Activated CD4-positive, alpha-beta memory T cell treated with anti-CD3 and anti-CD28 coated beads for 36 hours (primary cell): ENCODE measurements at regions of chr3 and their contacts with region 1.

Region 1: DNA sequence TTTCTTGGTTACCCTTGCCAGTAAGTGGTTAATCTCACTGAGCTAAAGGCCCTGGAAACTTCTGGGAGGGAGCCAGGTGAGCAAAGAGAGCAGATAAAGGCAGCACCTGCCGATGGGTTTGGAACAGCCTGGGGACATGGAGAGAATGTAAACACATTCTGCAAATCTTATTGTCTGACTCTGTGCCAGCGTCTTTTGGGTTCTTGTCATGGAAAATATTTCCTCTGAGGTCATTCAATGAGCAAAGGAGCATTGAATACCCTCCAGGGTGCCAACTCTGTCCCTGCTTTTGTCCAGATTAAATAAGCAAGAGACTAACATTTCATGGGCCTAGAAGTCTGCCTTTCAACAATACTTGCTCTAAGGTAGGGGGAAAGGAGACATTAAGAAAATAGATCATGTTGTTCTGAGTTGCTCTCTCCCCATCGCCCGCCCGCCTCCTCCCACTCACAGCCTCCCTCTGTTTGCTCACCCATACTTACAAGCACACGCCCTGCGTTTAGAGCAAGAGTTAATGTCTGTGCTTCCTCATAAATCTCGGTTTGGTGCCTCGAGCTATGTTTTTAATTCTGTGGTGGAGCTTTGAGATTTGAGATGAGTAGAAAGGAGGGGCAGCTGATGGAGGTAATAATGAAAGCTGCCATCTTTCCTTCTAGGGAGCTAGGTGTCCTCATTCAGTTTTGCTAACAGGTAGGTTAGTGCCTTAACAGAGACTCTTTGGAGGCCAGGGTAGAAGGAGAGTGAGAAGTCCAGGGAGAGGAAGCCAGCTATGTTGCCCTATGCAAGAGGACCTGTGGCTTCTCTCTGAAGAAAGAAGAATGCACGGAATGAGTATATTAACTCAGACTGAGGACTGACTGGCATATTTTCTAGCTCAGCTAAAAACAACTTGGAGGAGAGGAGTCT is 132.9 kb downstream of the TPRG1 start:
- DNase-seq: peak; percentile 46
- H3K4me3 Mint-ChIP-seq: no peak overlapping the region
- H3K27ac Mint-ChIP-seq: peak overlapping the region; percentile 89
- H3K4me1 Mint-ChIP-seq: peaks cover 49% of the 10 kb centered on the region
- H3K27me3 Mint-ChIP-seq: no peaks in the 10 kb centered on the region

Region 2: GRCh38 chr3:189172668-189173419 is 131.9 kb before region 1 on chr3:
- CTCF ChIA-PET with region 1: no interaction called
- POLR2A ChIA-PET with region 1: no interaction called
- intact Hi-C with region 1: no loop called
- DNase-seq: no peak
- H3K4me3 Mint-ChIP-seq: no peak overlapping the region
- H3K27ac Mint-ChIP-seq: no peak overlapping the region
- H3K4me1 Mint-ChIP-seq: peaks cover 4% of the 10 kb centered on the region
- H3K27me3 Mint-ChIP-seq: peaks cover 1% of the 10 kb centered on the region

Region 3: DNA sequence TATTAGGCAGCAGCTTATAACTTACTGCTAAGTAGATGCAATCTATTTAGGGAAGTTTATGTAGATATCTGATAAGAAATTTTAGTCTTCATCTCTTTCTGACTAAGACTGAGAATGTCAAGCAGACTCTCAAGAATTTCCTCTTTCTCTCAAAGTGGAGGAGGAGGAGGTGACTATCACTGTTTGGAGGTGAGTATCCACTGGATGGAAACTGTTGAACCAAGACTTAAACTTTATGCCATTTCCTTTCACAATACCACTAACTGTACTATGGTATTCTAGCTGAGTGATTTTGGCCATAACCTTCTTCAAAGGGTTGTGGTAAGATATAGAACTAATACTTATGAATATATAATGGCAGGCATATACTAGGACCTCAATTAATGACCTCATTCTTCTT is 68.3 kb before region 1 on chr3:
- CTCF ChIA-PET with region 1: no interaction called
- POLR2A ChIA-PET with region 1: no interaction called
- intact Hi-C with region 1: no loop called
- DNase-seq: no peak
- H3K4me3 Mint-ChIP-seq: no peak overlapping the region
- H3K27ac Mint-ChIP-seq: no peak overlapping the region
- H3K4me1 Mint-ChIP-seq: peaks cover 4% of the 10 kb centered on the region
- H3K27me3 Mint-ChIP-seq: peaks cover 2% of the 10 kb centered on the region

Region 4: DNA sequence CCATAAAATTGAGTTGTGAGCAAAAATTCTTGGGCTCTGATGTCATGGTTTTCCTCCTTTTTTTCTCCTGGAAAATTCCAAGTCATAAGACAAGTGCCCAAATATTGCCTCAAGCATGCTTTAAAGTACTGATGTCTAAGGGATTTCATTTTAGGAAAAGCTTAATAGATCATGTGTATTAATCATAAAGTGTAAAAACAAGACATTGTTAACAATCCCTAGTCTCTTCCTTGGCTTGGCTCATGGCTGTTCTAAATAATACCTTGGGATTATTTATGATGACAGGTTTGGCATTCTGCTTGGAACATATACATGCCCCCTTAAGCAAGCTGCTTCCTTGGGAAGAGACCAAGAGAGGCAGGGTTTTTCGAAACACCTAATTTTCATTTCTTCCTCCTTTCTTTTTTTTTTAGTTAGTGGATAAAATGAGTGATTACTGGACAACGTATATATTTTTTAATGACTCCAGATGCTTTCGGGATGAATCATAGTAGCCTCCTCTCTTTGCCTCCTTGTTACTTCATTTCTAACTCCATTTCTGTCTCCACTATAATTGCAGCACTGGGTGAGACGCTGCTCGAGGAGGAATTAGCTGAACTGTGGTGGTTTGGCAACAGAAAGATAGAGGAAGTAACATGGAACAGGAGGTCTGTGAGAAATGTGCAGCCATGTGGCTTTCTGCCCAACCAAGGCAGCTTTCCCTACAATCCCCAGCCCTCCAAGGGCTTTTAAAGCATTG is 28.0 kb before region 1 on chr3:
- CTCF ChIA-PET with region 1: interaction called, 7 read pairs
- POLR2A ChIA-PET with region 1: interaction called, 3 read pairs
- intact Hi-C with region 1: loop called (anchors 1 kb)
- DNase-seq: no peak
- H3K4me3 Mint-ChIP-seq: no peak overlapping the region
- H3K27ac Mint-ChIP-seq: peak overlapping the region; percentile 5
- H3K4me1 Mint-ChIP-seq: peaks cover 30% of the 10 kb centered on the region
- H3K27me3 Mint-ChIP-seq: no peaks in the 10 kb centered on the region

Region 5: DNA sequence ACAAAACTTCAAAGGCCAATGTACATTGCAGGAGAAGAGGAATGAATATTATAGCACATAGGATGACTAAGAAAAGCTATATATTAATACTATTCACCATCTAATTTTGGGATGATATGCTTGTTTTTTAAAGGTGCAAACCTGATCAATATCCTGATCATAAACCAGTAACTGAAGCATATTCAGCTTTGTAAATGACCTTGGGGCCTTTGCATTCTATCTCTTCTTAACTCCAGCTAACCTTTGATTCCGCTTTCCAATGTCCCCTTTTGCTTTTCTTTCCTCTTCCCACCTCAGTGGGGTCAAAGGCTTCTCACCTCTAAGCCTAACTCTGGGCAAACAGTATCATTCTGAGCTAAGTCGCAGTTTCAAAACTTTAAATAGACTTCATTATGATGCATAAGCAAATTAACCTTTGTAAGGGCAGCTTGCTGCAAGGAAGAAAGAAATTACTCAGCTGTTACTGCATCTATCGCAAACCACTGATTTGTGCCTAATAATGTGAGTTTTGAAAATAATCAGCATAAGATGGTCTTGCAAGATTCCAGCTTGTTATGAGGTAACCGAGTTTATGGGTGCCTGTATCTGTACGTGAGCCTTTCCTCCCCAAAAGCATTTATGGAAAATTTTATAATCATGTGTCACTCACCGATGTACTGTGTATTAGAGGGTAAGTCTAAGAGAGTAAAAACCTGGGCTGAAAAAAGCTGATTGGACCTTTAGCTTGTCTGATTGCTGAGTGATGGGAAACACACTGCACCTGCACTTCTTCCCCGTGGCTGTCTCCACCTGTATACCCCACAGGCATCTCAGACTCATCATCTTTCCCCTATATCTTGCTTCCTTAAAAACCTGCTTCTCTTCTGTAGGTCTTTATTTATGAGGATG is 16.1 kb before region 1 on chr3:
- CTCF ChIA-PET with region 1: interaction called, 3 read pairs
- POLR2A ChIA-PET with region 1: interaction called, 17 read pairs
- intact Hi-C with region 1: loop called (anchors 1 kb)
- DNase-seq: no peak
- H3K4me3 Mint-ChIP-seq: no peak overlapping the region
- H3K27ac Mint-ChIP-seq: peak overlapping the region; percentile 33
- H3K4me1 Mint-ChIP-seq: peaks cover 33% of the 10 kb centered on the region
- H3K27me3 Mint-ChIP-seq: no peaks in the 10 kb centered on the region

Region 6: GRCh38 chr3:189334064-189334920 is 29.6 kb after region 1 on chr3:
- CTCF ChIA-PET with region 1: interaction called, 4 read pairs
- POLR2A ChIA-PET with region 1: interaction called, 13 read pairs
- intact Hi-C with region 1: loop called (anchors 1 kb)
- DNase-seq: no peak
- H3K4me3 Mint-ChIP-seq: no peak overlapping the region
- H3K27ac Mint-ChIP-seq: no peak overlapping the region
- H3K4me1 Mint-ChIP-seq: peaks cover 40% of the 10 kb centered on the region
- H3K27me3 Mint-ChIP-seq: no peaks in the 10 kb centered on the region

Region 7: DNA sequence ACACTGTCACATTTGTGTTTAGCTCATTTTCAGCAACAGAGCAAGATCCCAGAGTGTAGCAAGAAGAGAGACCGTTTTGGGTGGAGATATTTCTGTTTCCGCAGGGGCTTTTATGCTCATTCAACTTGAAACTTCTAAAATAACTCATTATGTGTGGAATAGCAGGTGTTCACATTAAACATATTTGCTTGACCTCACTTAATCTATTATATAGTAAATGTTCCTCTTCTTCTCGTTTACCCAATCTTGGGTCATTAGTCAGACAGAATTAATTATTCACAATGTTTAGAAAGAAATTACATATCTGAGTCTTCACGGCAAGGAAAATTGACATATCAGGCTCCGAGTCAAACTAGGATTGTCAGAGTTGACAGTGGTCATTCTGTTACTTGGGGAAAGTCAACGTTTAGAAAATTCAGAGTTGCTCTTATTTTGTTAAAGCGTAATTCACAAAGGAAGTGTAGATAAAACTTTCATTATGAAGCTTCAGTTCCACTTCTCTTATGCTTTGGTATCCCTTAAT is 90.0 kb after region 1 on chr3:
- CTCF ChIA-PET with region 1: no interaction called
- POLR2A ChIA-PET with region 1: no interaction called
- intact Hi-C with region 1: loop called (anchors 2 kb)
- DNase-seq: no peak
- H3K4me3 Mint-ChIP-seq: no peak overlapping the region
- H3K27ac Mint-ChIP-seq: no peak overlapping the region
- H3K4me1 Mint-ChIP-seq: peaks cover 20% of the 10 kb centered on the region
- H3K27me3 Mint-ChIP-seq: no peaks in the 10 kb centered on the region

Region 8: GRCh38 chr3:189563866-189564563 is 259.3 kb after region 1 on chr3:
- CTCF ChIA-PET with region 1: no interaction called
- POLR2A ChIA-PET with region 1: no interaction called
- intact Hi-C with region 1: loop called (anchors 5 kb)
- DNase-seq: peak; percentile 74
- H3K4me3 Mint-ChIP-seq: no peak overlapping the region
- H3K27ac Mint-ChIP-seq: no peak overlapping the region
- H3K4me1 Mint-ChIP-seq: peaks cover 12% of the 10 kb centered on the region
- H3K27me3 Mint-ChIP-seq: peaks cover 1% of the 10 kb centered on the region